ENCODE measurements at regions of chr14 and their contacts with region 1.

Region 1: GRCh38 chr14:76876076-76876475 is 49.9 kb downstream of the LRRC74A start:
- DNase-seq: peak; percentile 81
- ATAC-seq: peak; percentile 95
- H3K4me3 ChIP-seq: no peak overlapping the region
- H3K27ac ChIP-seq: no peak overlapping the region
- H3K4me1 ChIP-seq: peaks cover 0 to 9% of the 10 kb centered on the region in 2 experiments; a peak in 3 of 4 replicates
- H3K27me3 ChIP-seq: no peaks in the 10 kb centered on the region
- CTCF ChIP-seq: peak; percentile 96 to 98 (median 97)
- POLR2A ChIP-seq: no peak
- RAD21 ChIP-seq: peak; percentile 100

Region 2: GRCh38 chr14:76910371-76910890 is 34.4 kb after region 1 on chr14:
- CTCF ChIA-PET with region 1: interaction called, 28 read pairs
- POLR2A ChIA-PET with region 1: no interaction called
- RAD21 ChIA-PET with region 1: interaction called, 4 to 10 read pairs
- intact Hi-C with region 1: no loop called
- DNase-seq: no peak
- ATAC-seq: no peak
- H3K4me3 ChIP-seq: no peak overlapping the region
- H3K27ac ChIP-seq: no peak overlapping the region
- H3K4me1 ChIP-seq: peaks cover 40 to 57% of the 10 kb centered on the region in 2 experiments
- H3K27me3 ChIP-seq: no peaks in the 10 kb centered on the region
- CTCF ChIP-seq: no peak
- POLR2A ChIP-seq: no peak
- RAD21 ChIP-seq: no peak

Region 3: DNA sequence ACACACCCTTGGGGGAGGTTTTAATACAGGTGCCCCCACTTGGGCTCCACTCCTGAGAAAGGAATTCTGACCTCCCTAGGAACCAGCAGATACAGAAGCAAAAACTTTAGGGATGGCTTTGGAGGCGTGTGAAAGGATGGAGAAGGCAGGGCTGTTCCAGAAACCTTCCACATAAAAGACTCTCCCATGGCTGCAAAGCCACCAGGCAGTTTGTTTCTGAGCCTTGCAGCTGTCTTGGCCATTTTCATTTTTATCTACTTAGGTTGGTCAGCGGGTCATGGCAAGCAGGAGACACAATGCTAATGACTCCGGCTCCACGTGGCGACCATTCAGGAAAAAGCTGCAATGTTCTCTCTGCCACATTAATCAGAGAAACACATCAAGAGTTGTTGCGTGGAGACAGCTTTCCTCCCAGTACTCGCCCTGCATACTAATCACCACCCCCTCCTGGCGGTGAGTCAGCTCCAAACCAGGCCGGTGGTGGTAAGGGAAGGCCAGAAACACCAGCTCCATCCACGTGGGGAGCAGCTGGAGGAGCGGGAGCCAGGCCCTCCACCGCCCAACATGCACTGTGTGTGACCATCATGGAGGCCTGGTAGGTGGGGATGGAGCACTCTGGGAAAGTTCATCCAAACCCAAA is 183.3 kb after region 1 on chr14:
- CTCF ChIA-PET with region 1: interaction called, 22 read pairs
- POLR2A ChIA-PET with region 1: interaction called, 7 read pairs
- RAD21 ChIA-PET with region 1: interaction called, 7 to 8 read pairs
- intact Hi-C with region 1: no loop called
- DNase-seq: peak; percentile 67
- ATAC-seq: peak; percentile 98
- H3K4me3 ChIP-seq: no peak overlapping the region
- H3K27ac ChIP-seq: peak overlapping the region; percentile 40; the same call in 1 of the 2 replicates
- H3K4me1 ChIP-seq: peaks cover 15 to 31% of the 10 kb centered on the region in 2 experiments
- H3K27me3 ChIP-seq: no peaks in the 10 kb centered on the region
- CTCF ChIP-seq: peak in 2 of 3 experiments; percentile 34 to 37; a peak in 4 of 6 replicates
- POLR2A ChIP-seq: no peak
- RAD21 ChIP-seq: no peak

Region 4: GRCh38 chr14:77086017-77086736 is 210.1 kb after region 1 on chr14:
- CTCF ChIA-PET with region 1: interaction called, 12 read pairs
- POLR2A ChIA-PET with region 1: no interaction called
- RAD21 ChIA-PET with region 1: interaction called, 3 to 12 read pairs
- intact Hi-C with region 1: no loop called
- DNase-seq: no peak
- ATAC-seq: peak; percentile 48; the same call in 1 of the 2 replicates
- H3K4me3 ChIP-seq: no peak overlapping the region
- H3K27ac ChIP-seq: no peak overlapping the region
- H3K4me1 ChIP-seq: peaks cover 22 to 27% of the 10 kb centered on the region in 2 experiments
- H3K27me3 ChIP-seq: no peaks in the 10 kb centered on the region
- CTCF ChIP-seq: no peak
- POLR2A ChIP-seq: no peak
- RAD21 ChIP-seq: no peak

Region 5: GRCh38 chr14:77151918-77152588 is 276.0 kb after region 1 on chr14:
- CTCF ChIA-PET with region 1: interaction called, 67 read pairs
- POLR2A ChIA-PET with region 1: no interaction called
- RAD21 ChIA-PET with region 1: interaction called, 11 to 12 read pairs
- intact Hi-C with region 1: loop called (anchors 1 kb)
- DNase-seq: peak; percentile 28
- ATAC-seq: peak; percentile 76
- H3K4me3 ChIP-seq: no peak overlapping the region
- H3K27ac ChIP-seq: no peak overlapping the region
- H3K4me1 ChIP-seq: peaks cover 0 to 14% of the 10 kb centered on the region in 2 experiments; a peak in 2 of 4 replicates
- H3K27me3 ChIP-seq: no peaks in the 10 kb centered on the region; the same call in 1 of the 2 replicates
- CTCF ChIP-seq: peak; percentile 7 to 62 (median 42); a peak in 3 of 6 replicates
- POLR2A ChIP-seq: no peak
- RAD21 ChIP-seq: peak; percentile 79

Region 6: DNA sequence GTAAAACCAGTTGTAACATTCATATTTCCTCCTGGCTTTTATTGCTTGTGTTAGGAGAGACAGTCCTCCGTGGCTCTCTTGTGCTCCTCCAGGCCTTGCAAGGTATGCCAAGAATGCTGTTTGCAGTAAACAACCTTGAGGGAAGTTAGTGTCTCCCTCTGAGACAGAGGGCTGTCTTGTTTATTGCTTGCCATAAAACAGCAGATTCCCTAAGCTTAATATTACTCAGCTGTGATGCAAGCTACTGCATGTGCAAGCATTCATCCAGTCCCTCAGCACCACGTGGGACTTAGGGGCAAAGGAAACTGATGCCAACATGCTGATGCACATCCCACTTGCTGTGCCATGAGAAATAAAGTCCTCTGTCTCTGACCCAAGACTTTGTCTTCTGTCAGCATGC is 438.0 kb after region 1 on chr14:
- CTCF ChIA-PET with region 1: interaction called, 17 read pairs
- POLR2A ChIA-PET with region 1: no interaction called
- RAD21 ChIA-PET with region 1: interaction called in 1 of 2 experiments, 5 read pairs
- intact Hi-C with region 1: loop called (anchors 5 kb)
- DNase-seq: no peak
- ATAC-seq: no peak
- H3K4me3 ChIP-seq: no peak overlapping the region
- H3K27ac ChIP-seq: no peak overlapping the region
- H3K4me1 ChIP-seq: peaks cover 0 to 5% of the 10 kb centered on the region in 2 experiments; a peak in 1 of 4 replicates
- H3K27me3 ChIP-seq: no peaks in the 10 kb centered on the region
- CTCF ChIP-seq: no peak
- POLR2A ChIP-seq: no peak
- RAD21 ChIP-seq: no peak

Measured in HCT116 (cell line).